Posterior vena cava (tissue), 2 donors: ENCODE measurements at regions of chr7 and their contacts with region 1.

Region 1: DNA sequence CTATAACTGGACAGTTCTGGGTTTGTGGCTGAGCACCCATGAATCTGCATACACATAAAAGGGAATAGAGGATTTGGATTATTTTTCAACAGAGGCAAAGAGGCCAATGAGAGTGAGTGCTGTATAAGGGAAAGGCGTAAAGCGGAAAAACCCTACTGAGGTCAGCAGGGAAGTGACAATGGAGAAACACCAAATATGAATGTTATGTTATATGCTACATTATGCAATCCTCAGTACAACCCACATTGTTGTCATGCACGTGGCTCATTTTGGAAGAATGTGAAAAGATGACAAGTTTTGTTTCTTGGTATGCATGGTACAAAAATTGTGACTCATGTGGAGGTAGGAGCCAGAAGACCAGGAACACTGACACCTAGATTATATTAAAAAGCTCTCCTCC is 113.6 kb upstream of the AMPH start:
- DNase-seq: no peak

Region 2: GRCh38 chr7:38727184-38727940 is 17.4 kb before region 1 on chr7:
- intact Hi-C with region 1: loop called in 1 of 2 experiments (anchors 2 kb)
- DNase-seq: no peak